Psoas muscle (tissue), 8 donors: ENCODE measurements at regions of chr18 and their contacts with region 1.

Region 1: GRCh38 chr18:37729716-37730115 is 164.1 kb upstream of the CELF4 start:
- DNase-seq: no peak
- ATAC-seq: no peak
- H3K4me3 ChIP-seq: no peak overlapping the region
- H3K27ac ChIP-seq: no peak overlapping the region
- H3K4me1 ChIP-seq: no peaks in the 10 kb centered on the region
- H3K27me3 ChIP-seq: no peaks in the 10 kb centered on the region
- CTCF ChIP-seq: no peak

Region 2: DNA sequence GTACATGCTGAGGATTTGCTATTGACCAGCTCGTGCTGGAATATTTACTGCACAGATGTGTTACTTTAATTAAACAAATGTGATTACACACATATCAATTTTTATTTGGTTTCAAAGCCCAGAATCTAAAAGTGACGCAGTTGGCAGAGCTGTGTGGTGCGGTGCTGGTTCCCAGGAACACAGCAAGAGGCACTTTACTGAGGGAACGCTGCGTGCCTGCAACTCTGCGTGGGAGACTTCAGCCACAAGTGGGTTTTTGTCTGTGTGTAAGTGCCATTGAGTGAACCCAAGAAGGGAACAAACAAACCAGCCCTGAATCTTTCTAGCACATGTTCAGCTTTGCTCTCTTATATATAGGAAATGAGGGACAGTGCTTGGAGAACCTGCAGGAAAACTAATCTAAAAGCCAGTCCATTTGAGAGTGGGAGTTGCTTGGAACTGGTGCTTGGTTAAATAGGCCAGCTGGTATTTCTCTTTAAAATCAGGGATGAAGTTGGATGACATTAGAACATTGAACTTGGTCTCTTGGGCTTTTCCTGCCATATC is 32.4 kb after region 1 on chr18:
- intact Hi-C with region 1: loop called in 1 of 2 experiments (anchors 2 kb)
- DNase-seq: no peak
- ATAC-seq: no peak
- H3K4me3 ChIP-seq: no peak overlapping the region
- H3K27ac ChIP-seq: no peak overlapping the region
- H3K4me1 ChIP-seq: no peaks in the 10 kb centered on the region
- H3K27me3 ChIP-seq: no peaks in the 10 kb centered on the region
- CTCF ChIP-seq: no peak